ENCODE measurements at regions of chrX and their contacts with region 1.

Region 1: DNA sequence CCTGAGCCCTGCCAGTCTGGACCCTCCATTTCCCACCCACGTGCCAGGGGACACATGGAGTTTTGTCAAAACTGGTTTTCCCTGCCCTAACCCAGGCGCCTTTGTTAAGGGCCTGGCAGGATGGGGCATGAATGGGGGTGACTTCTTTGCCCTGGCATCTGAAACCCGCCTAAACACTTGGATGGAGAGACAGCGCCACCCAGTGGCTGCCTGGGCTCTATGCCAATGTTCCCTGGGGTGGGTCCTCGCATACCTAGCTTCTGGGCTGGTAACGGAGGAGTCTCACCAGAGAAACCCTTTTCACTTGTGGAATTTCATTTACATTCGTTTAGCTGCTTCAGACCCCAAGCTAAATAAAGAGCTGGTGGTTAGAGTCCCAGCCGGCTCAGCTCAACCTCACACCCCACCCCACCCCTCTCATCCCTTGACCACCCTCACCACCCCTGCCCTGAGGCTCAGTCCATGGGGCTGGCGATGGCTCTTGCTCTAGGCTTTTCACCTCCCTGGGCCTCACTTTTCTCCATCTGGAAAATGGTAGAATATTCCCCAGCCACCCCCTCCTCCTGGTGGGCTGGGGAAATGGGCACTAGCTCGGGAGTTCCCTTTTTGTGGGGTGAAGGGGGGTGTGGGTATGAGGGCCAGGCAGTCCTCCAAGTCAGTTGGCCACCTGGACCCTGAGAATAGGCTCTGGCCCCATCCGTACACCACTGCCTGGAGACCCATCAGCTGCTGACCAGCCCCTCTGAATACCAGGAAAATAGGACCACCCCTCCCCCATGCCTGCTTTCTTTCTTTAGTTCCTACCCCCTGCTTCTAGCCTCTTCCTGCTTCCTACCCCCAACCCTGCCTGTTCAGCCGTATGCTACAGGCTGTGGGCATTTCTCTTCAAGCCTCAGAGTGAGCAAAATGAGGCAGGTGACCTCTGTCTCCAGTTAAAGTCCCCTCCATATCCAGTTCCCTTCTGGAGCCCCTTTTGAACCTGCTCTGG is 57.1 kb upstream of the PJA1 start:
- DNase-seq: peak; percentile 85
- ATAC-seq: peak; percentile 90
- H3K4me3 Mint-ChIP-seq: no peak overlapping the region
- H3K27ac Mint-ChIP-seq: no peak overlapping the region
- H3K4me1 Mint-ChIP-seq: no peaks in the 10 kb centered on the region
- H3K27me3 Mint-ChIP-seq: no peaks in the 10 kb centered on the region

Region 2: DNA sequence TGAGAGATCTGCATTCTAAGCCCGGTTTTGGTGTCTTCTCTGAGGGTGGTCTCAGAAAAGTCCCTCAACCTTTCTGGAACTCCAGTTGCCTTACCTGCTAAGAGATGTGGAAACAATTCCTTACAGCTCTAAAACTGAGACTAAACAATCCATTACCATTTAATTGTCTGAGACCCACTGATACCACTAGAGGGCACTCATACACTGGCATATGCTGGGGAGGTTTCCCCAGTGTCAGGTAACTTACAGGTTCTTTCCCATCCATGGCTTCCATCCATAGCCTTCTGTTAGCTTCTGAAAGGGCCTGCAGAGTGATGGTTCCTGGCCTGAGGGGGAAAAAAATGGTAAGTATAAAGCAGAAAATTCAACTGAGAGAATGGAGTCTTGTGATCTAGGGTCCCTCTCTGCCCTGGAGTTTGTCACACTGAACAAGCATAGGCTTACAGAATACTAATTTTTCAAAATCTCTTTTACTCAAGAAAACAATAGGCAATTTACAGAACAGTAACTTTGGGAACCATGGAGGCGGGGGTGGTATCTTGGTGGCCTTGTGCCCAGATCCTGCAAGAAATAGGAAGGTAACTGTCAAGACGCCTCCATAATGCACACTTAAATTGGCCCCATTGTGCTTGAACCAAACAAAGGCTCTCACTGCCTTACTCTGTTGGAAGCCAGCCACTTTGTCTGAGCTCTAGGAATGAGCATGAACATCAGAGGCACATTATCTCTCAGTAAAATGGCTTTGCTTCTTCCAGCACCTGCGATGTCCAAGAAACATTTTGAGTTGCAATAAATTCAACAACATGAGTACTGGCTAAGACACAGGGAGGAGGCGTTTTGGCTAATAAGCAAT is 1025.2 kb before region 1 on chrX:
- CTCF ChIA-PET with region 1: interaction called, 3 read pairs
- POLR2A ChIA-PET with region 1: no interaction called
- intact Hi-C with region 1: loop called in 1 of 2 experiments (anchors 5 kb)
- DNase-seq: peak; percentile 29
- ATAC-seq: no peak
- H3K4me3 Mint-ChIP-seq: no peak overlapping the region
- H3K27ac Mint-ChIP-seq: no peak overlapping the region
- H3K4me1 Mint-ChIP-seq: no peaks in the 10 kb centered on the region
- H3K27me3 Mint-ChIP-seq: no peaks in the 10 kb centered on the region

Region 3: GRCh38 chrX:68732906-68733493 is 489.4 kb before region 1 on chrX:
- CTCF ChIA-PET with region 1: interaction called, 5 read pairs
- POLR2A ChIA-PET with region 1: no interaction called
- intact Hi-C with region 1: loop called in 1 of 2 experiments (anchors 1 kb)
- DNase-seq: peak; percentile 82
- ATAC-seq: peak; percentile 83
- H3K4me3 Mint-ChIP-seq: no peak overlapping the region
- H3K27ac Mint-ChIP-seq: no peak overlapping the region
- H3K4me1 Mint-ChIP-seq: peaks cover 2% of the 10 kb centered on the region
- H3K27me3 Mint-ChIP-seq: peaks cover 9% of the 10 kb centered on the region

Region 4: GRCh38 chrX:68828740-68829552 is 393.5 kb before region 1 on chrX and contains the start of gene EFNB1:
- CTCF ChIA-PET with region 1: interaction called, 43 read pairs
- POLR2A ChIA-PET with region 1: no interaction called
- intact Hi-C with region 1: loop called (anchors 1 kb)
- DNase-seq: peak; percentile 90
- ATAC-seq: peak; percentile 86
- H3K4me3 Mint-ChIP-seq: peak within 1 kb of the TSS; percentile 79
- H3K27ac Mint-ChIP-seq: peak within 1 kb of the TSS; percentile 76
- H3K4me1 Mint-ChIP-seq: peaks cover 20% of the 10 kb centered on the region
- H3K27me3 Mint-ChIP-seq: no peaks in the 10 kb centered on the region
- total RNA-seq, gene EFNB1: 3.8 to 3.9 TPM

Region 5: DNA sequence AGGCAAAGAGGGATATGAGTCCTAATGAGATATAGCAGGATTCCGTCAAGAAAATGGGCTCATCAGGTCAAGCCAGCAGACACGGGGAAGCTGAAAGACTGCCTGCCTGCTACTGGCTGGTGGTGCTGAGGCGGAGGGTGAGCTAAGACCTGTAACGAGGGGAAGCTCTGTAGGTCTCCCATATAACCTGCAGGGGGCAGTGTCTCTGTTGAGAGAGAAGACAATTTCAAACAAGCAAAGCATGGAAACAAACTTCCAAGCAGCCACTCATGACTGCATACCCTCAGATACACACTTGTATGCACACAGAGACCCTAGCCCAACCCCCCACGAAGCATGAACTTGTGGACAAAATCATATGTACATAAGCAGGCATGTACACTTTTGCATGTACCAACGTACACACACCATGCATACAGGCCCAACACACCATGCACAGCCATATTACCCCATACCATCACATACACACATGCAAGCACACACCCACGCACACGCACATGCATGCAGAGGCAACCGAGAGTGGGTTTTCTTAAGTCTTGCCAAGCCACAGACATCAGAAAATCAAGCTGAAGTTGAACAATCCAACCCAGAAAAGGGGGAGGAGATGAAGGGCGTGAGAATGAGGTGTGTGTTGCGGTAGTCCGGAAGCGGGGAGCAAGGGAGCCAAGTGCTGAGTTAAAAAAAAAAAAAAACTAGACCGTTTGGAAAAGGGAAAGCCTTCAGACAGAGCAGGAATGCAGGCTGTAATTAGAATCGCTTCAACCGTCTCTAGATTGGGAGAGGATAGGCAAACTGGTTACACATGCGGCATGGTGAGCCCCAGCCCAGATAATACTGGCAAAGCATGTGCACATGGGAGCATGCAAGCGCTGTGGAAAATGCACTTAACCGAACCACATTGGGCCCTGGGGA is 128.2 kb before region 1 on chrX:
- CTCF ChIA-PET with region 1: interaction called, 4 read pairs
- POLR2A ChIA-PET with region 1: no interaction called
- intact Hi-C with region 1: loop called in 1 of 2 experiments (anchors 1 kb)
- DNase-seq: peak; percentile 49
- ATAC-seq: peak; percentile 58
- H3K4me3 Mint-ChIP-seq: no peak overlapping the region
- H3K27ac Mint-ChIP-seq: no peak overlapping the region
- H3K4me1 Mint-ChIP-seq: no peaks in the 10 kb centered on the region
- H3K27me3 Mint-ChIP-seq: no peaks in the 10 kb centered on the region

Region 6: GRCh38 chrX:69158166-69158980 is 64.0 kb before region 1 on chrX:
- CTCF ChIA-PET with region 1: interaction called, 3 read pairs
- POLR2A ChIA-PET with region 1: no interaction called
- intact Hi-C with region 1: loop called in 1 of 2 experiments (anchors 5 kb)
- DNase-seq: peak; percentile 46
- ATAC-seq: peak; percentile 74
- H3K4me3 Mint-ChIP-seq: no peak overlapping the region
- H3K27ac Mint-ChIP-seq: no peak overlapping the region
- H3K4me1 Mint-ChIP-seq: peaks cover 19% of the 10 kb centered on the region
- H3K27me3 Mint-ChIP-seq: no peaks in the 10 kb centered on the region

Region 7: DNA sequence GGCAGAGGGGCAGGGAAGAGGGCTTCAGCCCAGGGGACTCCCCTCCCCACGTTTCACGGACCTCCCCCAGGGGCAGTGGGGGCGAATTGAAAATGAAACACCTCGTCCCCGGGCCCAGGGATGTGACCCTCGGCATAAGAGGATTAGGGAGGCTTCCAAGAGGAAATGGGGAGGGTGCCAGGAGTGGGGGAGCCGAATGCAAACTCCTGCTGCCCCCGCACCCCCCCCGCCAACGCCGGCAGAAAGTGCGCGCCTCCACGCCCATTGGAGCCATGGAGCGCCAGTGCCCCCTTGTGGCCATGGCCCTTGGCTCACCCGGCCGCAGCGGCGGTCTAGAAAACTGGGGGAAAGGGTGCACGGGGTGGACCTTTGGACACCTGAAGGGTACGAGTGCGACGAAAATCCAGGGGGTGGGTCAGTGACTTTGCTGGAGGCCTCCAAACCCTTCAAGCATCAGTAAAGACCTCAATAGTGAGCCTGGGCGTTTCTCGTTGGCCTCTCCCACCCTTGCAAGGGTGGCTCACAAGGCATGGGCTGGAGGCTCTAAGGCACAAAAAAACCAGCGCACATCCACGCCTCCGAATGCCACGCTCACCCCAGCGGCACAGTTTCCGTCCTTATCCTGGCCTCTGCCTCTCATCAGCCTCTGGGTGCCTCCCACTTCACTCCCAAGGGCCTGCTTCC is 63.6 kb after region 1 on chrX:
- CTCF ChIA-PET with region 1: no interaction called
- POLR2A ChIA-PET with region 1: no interaction called
- intact Hi-C with region 1: loop called in 1 of 2 experiments (anchors 5 kb)
- DNase-seq: peak; percentile 72
- ATAC-seq: peak; percentile 66
- H3K4me3 Mint-ChIP-seq: peak overlapping the region; percentile 10
- H3K27ac Mint-ChIP-seq: no peak overlapping the region
- H3K4me1 Mint-ChIP-seq: no peaks in the 10 kb centered on the region
- H3K27me3 Mint-ChIP-seq: peaks cover 2% of the 10 kb centered on the region

Region 8: DNA sequence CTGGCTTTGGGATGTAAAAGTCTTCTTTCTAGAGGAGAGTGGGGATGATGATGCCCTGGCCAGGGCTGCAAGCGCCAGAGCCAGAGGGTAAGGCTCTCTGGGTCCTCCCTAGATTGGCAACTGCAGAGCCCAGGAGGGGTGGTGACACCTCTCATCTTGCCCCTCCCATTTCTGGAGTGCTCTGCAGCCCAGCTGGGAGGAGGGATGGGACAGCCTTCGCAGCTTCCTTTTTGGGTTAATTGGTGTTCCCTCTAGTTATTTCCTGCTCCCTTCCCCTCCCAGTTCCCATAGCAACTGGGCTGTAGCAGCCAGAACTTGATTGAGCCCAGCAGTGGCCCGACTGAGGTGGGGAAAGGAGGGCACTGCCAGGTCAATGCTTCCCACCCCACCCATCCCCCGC is 300.9 kb after region 1 on chrX:
- CTCF ChIA-PET with region 1: no interaction called
- POLR2A ChIA-PET with region 1: no interaction called
- intact Hi-C with region 1: no loop called
- DNase-seq: no peak
- ATAC-seq: no peak
- H3K4me3 Mint-ChIP-seq: no peak overlapping the region
- H3K27ac Mint-ChIP-seq: no peak overlapping the region
- H3K4me1 Mint-ChIP-seq: no peaks in the 10 kb centered on the region
- H3K27me3 Mint-ChIP-seq: peaks cover 15% of the 10 kb centered on the region